Gastrocnemius medialis (tissue), 4 donors: ENCODE measurements at regions of chr7 and their contacts with region 1.

Region 1: DNA sequence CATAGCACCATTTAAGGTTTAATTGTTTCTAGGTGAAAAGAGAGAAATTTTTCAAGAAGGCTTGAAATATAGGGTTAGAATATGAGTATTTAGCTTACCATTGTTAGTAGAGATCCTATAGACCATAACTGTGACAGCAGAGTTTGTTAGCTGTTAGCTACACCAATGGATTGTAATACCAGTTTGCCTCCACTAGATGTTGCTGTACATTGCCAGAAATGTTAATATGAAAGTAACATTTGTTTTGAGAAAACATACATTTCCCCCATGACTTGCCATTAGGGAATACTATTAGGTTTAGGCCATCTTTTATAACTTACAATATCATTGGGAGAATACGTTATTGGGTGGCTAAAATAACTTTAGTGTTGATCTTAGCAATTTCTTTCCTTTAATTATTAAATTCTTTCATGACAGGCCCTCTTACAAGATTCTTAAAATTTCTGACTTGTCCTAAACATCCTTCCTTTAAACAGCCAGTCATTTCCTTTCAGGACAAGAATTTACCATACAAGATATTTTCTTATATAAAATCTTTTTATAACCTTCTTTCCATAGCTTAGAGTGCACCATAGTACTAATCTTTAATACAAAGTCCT is 39.5 kb downstream of the ZNF117 start:
- DNase-seq: no peak
- ATAC-seq: peak; percentile 75 to 82
- H3K4me3 ChIP-seq: peak overlapping the region in 1 of 4 donors; percentile 14
- H3K27ac ChIP-seq: peak overlapping the region in 2 of 4 donors; percentile 40 to 77
- H3K4me1 ChIP-seq: peaks cover 8 to 11% of the 10 kb centered on the region in 2 donors
- H3K27me3 ChIP-seq: peaks cover 0 to 15% (median 11%) of the 10 kb centered on the region in 3 donors
- CTCF ChIP-seq: peak; percentile 67 to 95 (median 76)
- POLR2A ChIP-seq: no peak

Region 2: DNA sequence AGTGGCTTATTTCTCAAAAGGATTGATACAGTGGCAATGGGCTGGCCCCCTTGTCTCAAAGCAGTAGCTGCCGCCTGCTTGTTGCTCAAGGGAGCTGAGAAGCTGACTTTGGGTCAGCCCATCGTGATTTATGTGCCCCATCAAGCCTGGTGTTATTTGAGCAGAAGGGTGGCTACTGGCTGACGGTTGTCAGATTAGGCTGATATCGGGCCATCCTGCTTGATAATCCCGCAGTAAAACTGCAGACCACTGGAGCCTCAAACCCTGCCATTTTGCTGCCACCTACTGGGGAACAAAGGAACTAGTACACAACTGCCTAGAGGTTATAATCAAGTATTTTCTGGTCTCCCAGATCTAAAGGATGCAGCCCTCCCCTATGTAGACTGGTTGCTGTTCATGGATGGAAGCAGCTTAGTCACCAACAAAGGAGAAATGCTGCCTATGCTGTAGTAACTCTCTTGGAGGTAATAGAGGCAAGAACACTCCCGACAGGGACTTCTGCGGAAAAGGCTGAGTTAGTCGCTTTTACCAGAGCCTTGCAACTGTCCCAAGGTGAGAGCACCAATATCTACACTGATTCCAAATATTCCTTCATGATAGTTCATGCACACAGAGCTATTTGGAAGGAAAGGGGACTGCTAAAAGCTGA is 356.4 kb after region 1 on chr7:
- in situ Hi-C with region 1: loop called in 3 of 4 experiments (anchors 5 to 10 kb)
- intact Hi-C with region 1: no loop called
- DNase-seq: peak in 1 of 2 donors; percentile 8
- ATAC-seq: peak in 1 of 2 donors; percentile 39
- H3K4me3 ChIP-seq: no peak overlapping the region
- H3K27ac ChIP-seq: no peak overlapping the region
- H3K4me1 ChIP-seq: no peaks in the 10 kb centered on the region
- H3K27me3 ChIP-seq: no peaks in the 10 kb centered on the region
- CTCF ChIP-seq: peak in 4 of 5 experiments; percentile 37 to 83 (median 69)
- POLR2A ChIP-seq: no peak